BJ (cell line): ENCODE measurements at regions of chr17 and their contacts with region 1.

Region 1: GRCh38 chr17:31842183-31843069 is 16.6 kb downstream of the COPRS start:
- DNase-seq: no peak
- H3K4me3 ChIP-seq: no peak overlapping the region
- H3K27me3 ChIP-seq: no peaks in the 10 kb centered on the region
- CTCF ChIP-seq: peak; percentile 89

Region 2: DNA sequence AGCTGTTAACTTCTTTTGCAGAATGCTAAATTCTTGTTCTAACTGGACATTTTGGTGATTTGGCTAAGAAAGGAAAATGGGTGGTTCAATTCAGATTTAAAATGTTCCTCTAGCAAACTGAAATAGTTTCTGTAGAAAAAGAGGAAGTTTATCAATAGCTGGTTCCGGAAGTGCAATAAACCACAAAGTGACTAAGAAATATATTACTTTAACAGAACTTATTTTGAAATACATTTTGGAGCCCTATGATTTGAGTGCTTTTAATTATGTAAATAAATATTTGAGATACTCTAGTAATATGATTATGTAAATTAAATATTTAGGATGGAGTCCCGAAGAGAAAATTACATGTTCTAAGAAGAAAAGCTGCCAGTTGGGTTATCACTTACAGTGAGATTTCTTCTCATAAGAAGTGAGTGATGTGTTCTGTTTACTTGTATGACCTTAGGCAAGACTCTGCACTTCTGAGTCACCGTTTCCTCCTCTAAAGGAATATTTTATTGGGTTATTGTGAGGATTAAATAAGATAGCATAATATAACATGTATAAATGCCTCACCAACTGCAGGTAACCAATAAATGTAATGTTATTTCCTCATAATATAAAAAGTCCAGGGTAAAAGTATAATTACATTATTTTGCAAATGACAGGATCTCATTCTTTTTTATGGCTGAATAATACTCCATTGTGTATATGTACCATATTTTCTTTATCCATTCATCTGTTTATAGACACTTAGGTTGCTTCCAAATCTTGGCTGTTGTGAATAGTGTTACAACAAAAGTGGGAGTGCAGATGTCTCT is 528.2 kb before region 1 on chr17 and contains the start of gene EVI2B:
- CTCF ChIA-PET with region 1: no interaction called
- POLR2A ChIA-PET with region 1: no interaction called
- DNase-seq: peak; percentile 14
- H3K4me3 ChIP-seq: no peak within 1 kb of the TSS
- H3K27me3 ChIP-seq: no peaks in the 10 kb centered on the region
- CTCF ChIP-seq: no peak
- polyA plus RNA-seq, gene EVI2B: 0.12 and 0.43 TPM in 2 replicates

Region 3: DNA sequence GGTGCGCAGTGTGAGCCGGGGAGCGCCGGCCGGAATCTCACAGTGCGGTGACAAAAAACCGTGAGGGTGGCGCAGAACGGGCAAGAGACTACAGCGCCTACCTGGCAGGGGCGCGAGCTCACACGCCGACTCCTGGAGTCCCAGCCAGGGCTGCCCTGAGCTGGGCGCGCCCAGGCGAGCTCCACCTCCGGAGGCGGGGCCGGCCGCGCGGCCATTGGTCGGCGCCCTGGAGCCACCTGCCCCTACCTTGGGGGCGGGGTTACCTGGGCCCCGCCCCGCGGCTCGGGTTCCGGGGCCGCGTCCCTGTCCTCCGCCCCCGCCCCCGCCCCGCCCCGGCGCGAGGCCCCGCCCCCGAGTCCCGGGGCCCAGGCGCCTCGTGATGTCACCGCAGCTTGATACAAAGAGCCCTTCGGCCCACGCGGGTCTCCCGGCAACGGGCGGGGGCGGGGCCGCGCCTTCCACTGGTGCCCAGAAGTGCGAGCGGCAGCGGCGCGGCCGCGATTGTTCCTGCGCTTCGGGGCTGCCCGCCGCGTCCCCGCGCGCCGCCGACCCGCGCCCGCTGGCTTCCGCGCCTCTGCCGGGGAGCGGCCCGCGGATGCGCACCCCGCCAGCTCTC is 354.7 kb before region 1 on chr17:
- CTCF ChIA-PET with region 1: no interaction called
- POLR2A ChIA-PET with region 1: no interaction called
- DNase-seq: no peak
- H3K4me3 ChIP-seq: peak overlapping the region; percentile 23
- H3K27me3 ChIP-seq: peaks cover 35% of the 10 kb centered on the region
- CTCF ChIP-seq: no peak

Region 4: GRCh38 chr17:31524926-31525800 is 317.3 kb before region 1 on chr17:
- CTCF ChIA-PET with region 1: interaction called, 12 read pairs
- POLR2A ChIA-PET with region 1: no interaction called
- DNase-seq: peak; percentile 47
- H3K4me3 ChIP-seq: no peak overlapping the region
- H3K27me3 ChIP-seq: no peaks in the 10 kb centered on the region
- CTCF ChIP-seq: peak; percentile 95

Region 5: GRCh38 chr17:31558748-31559644 is 283.4 kb before region 1 on chr17:
- CTCF ChIA-PET with region 1: interaction called, 172 read pairs
- POLR2A ChIA-PET with region 1: no interaction called
- DNase-seq: no peak
- H3K4me3 ChIP-seq: peak overlapping the region; percentile 94
- H3K27me3 ChIP-seq: no peaks in the 10 kb centered on the region
- CTCF ChIP-seq: peak; percentile 51

Region 6: DNA sequence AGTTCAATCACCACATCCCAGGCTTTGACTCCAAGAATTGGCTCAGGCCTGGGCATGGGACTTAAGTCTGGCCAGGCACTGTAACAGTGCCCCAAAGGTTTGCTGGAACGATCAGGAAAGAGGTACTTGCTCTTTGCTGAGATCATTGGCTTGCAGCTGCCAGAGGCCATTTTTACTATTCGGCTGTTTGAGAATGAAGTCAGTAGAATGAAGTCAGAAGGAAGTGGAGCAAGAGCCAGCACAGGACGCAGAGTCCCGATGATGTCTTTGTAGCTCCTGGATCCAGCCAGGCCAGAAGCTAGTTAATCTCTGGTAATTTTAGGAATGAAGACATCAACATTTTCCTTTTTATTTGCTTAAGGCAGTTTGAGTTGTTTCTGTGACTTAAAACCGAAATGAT is 255.5 kb before region 1 on chr17:
- CTCF ChIA-PET with region 1: interaction called, 15 read pairs
- POLR2A ChIA-PET with region 1: no interaction called
- DNase-seq: no peak
- H3K4me3 ChIP-seq: no peak overlapping the region
- H3K27me3 ChIP-seq: no peaks in the 10 kb centered on the region
- CTCF ChIP-seq: no peak

Region 7: DNA sequence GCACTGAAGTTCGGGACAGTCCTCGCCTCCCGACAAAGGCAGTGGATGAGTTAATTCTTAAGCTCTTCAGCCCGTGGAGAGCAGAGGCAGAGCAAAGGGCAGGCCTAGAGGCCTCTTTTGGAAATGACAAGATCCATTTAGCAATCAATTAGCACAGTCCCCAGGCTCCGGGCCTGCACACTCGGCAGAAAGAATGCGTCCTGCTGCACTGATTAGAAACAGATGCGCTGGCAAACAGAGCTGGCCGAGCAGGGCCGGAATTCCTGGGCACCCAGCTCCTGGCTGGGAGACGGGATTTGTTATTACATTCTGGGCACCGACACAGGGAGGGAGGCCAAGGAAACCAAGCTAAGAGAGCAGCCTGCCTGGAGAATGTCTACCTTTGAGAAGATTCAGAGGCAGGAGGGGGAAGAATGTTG is 146.2 kb before region 1 on chr17:
- CTCF ChIA-PET with region 1: interaction called, 12 read pairs
- POLR2A ChIA-PET with region 1: no interaction called
- DNase-seq: peak; percentile 83
- H3K4me3 ChIP-seq: no peak overlapping the region
- H3K27me3 ChIP-seq: no peaks in the 10 kb centered on the region
- CTCF ChIP-seq: peak; percentile 46

Region 8: GRCh38 chr17:31825961-31826691 is 16.3 kb before region 1 on chr17:
- CTCF ChIA-PET with region 1: interaction called, 20 read pairs
- POLR2A ChIA-PET with region 1: no interaction called
- DNase-seq: no peak
- H3K4me3 ChIP-seq: no peak overlapping the region
- H3K27me3 ChIP-seq: no peaks in the 10 kb centered on the region
- CTCF ChIP-seq: no peak

Region 9: GRCh38 chr17:31907342-31907962 is 65.0 kb after region 1 on chr17:
- CTCF ChIA-PET with region 1: no interaction called
- POLR2A ChIA-PET with region 1: no interaction called
- DNase-seq: no peak
- H3K4me3 ChIP-seq: no peak overlapping the region
- H3K27me3 ChIP-seq: no peaks in the 10 kb centered on the region; the same call in 1 of the 2 replicates
- CTCF ChIP-seq: no peak

Region 10: GRCh38 chr17:31967648-31968047 is 125.2 kb after region 1 on chr17:
- CTCF ChIA-PET with region 1: no interaction called
- POLR2A ChIA-PET with region 1: no interaction called
- DNase-seq: no peak
- H3K4me3 ChIP-seq: no peak overlapping the region
- H3K27me3 ChIP-seq: no peaks in the 10 kb centered on the region
- CTCF ChIP-seq: no peak